Mucosa of descending colon (tissue), 3 donors: ENCODE measurements at regions of chr5 and their contacts with region 1.

Region 1: GRCh38 chr5:35777358-35778087 is 79.2 kb upstream of the IL7R start:
- DNase-seq: peak in 1 of 3 donors; percentile 92
- ATAC-seq: peak; percentile 70
- H3K4me3 ChIP-seq: no peak overlapping the region
- H3K4me1 ChIP-seq: no peaks in the 10 kb centered on the region
- CTCF ChIP-seq: no peak

Region 2: GRCh38 chr5:35436410-35437057 is 341.0 kb before region 1 on chr5:
- intact Hi-C with region 1: no loop called
- DNase-seq: peak in 1 of 3 donors; percentile 57
- ATAC-seq: peak; percentile 72
- H3K4me3 ChIP-seq: no peak overlapping the region
- H3K4me1 ChIP-seq: no peaks in the 10 kb centered on the region
- CTCF ChIP-seq: no peak

Region 3: GRCh38 chr5:35926389-35927051 is 149.0 kb after region 1 on chr5:
- intact Hi-C with region 1: loop called in 1 of 2 experiments (anchors 5 kb)
- DNase-seq: peak in 1 of 3 donors; percentile 77
- ATAC-seq: peak; percentile 68
- H3K4me3 ChIP-seq: no peak overlapping the region
- H3K4me1 ChIP-seq: no peaks in the 10 kb centered on the region
- CTCF ChIP-seq: peak; percentile 45